ENCODE measurements at regions of chr17 and their contacts with region 1.

Region 1: GRCh38 chr17:1516388-1517161 is at the start of gene INPP5K:
- DNase-seq: peak; percentile 98
- H3K4me3 ChIP-seq: peak within 1 kb of the TSS; percentile 99
- H3K27ac ChIP-seq: peak within 1 kb of the TSS; percentile 95
- H3K4me1 ChIP-seq: peaks cover 23% of the 10 kb centered on the region
- H3K27me3 ChIP-seq: no peaks in the 10 kb centered on the region
- CTCF ChIP-seq: no peak
- total RNA-seq, gene INPP5K: 27.6 to 35.5 TPM

Region 2: DNA sequence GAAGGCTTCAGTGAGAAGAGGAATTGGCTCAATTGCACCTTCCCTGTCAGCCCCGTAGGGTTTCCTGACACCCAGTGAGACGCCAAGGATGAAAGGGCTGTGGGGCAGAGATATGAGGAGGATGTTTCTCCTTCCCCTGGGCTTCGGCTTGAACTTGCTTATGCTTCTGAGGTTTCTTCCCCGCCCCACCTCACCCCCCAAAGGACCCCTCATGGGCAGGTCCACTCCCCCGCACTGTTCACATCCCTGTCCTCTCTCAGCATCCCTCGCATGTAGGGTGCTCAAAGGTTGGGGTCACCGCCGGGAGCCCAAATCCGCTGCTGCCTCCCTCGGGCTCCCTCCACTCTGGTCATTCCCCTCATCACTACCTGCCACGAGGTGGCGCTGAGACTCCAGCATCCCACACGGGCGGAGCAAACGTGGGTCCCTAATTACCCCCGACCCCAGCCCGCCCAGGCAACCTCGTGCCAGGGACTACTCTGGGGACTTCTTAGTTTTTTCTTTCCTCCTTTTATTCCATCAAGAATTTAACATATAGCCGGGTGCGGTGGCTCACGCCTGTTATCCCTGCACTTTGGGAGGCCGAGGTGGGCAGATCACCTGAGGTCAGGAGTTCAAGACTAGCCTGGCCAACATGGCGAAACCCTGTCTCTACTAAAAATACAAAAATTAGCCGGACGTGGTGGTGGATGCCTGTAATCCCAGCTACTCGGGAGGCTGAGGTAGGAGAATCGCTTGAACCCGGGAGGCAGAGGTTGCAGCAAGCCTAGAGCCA is 240.4 kb before region 1 on chr17:
- intact Hi-C with region 1: loop called (anchors 10 kb)
- DNase-seq: peak; percentile 69
- H3K4me3 ChIP-seq: no peak overlapping the region
- H3K27ac ChIP-seq: no peak overlapping the region
- H3K4me1 ChIP-seq: no peaks in the 10 kb centered on the region
- H3K27me3 ChIP-seq: peaks cover 21% of the 10 kb centered on the region
- CTCF ChIP-seq: peak; percentile 67

Region 3: GRCh38 chr17:1294157-1294717 is 222.3 kb before region 1 on chr17:
- intact Hi-C with region 1: no loop called
- DNase-seq: peak; percentile 28
- H3K4me3 ChIP-seq: no peak overlapping the region
- H3K27ac ChIP-seq: no peak overlapping the region
- H3K4me1 ChIP-seq: no peaks in the 10 kb centered on the region
- H3K27me3 ChIP-seq: no peaks in the 10 kb centered on the region
- CTCF ChIP-seq: no peak

Region 4: DNA sequence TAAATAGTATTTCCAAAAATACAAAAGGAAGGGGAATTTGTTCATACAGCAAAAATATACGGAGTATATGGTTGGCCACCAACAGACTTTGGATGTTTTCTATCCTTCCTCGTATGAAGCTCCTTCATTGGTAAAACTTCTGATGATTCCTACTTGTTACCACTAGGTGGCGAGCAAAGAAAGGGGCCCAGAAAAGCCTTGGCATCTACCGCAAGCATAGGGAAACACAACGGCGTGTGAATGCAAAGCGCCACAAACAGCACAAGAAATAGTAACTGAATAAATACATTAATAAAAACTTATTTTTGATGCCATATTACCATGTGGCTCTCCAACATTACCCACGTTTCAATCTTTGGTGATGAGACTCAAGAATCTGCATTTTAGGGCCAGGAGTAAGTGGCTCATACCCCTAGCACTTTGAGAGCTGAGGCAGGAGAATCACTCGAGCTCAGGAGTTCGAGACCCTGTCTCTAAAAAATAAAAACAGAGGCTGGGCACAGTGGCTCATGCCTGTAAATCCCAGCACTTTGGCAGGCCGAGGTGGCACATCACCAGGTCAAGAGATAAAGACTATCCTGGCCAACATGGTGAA is 151.0 kb before region 1 on chr17:
- intact Hi-C with region 1: loop called (anchors 5 kb)
- DNase-seq: peak; percentile 70
- H3K4me3 ChIP-seq: no peak overlapping the region
- H3K27ac ChIP-seq: no peak overlapping the region
- H3K4me1 ChIP-seq: peaks cover 5% of the 10 kb centered on the region
- H3K27me3 ChIP-seq: no peaks in the 10 kb centered on the region
- CTCF ChIP-seq: peak; percentile 70

Region 5: GRCh38 chr17:1455797-1456599 is 60.6 kb before region 1 on chr17 and contains the start of gene CRK:
- intact Hi-C with region 1: loop called (anchors 2 kb)
- DNase-seq: peak; percentile 97
- H3K4me3 ChIP-seq: peak within 1 kb of the TSS; percentile 86
- H3K27ac ChIP-seq: peak within 1 kb of the TSS; percentile 93
- H3K4me1 ChIP-seq: peaks cover 13% of the 10 kb centered on the region
- H3K27me3 ChIP-seq: no peaks in the 10 kb centered on the region
- CTCF ChIP-seq: no peak
- total RNA-seq, gene CRK: 74.5 to 82.0 TPM